Caco-2 (cell line): ENCODE measurements at regions of chr7 and their contacts with region 1.

Region 1: GRCh38 chr7:29878081-29878688 is 71.9 kb downstream of the WIPF3 start:
- DNase-seq: peak in 1 of 2 experiments; percentile 26
- H3K4me3 ChIP-seq: no peak overlapping the region
- H3K4me3 Mint-ChIP-seq: no peak overlapping the region
- H3K27ac Mint-ChIP-seq: no peak overlapping the region
- H3K4me1 ChIP-seq: no peaks in the 10 kb centered on the region
- H3K4me1 Mint-ChIP-seq: no peaks in the 10 kb centered on the region
- H3K27me3 ChIP-seq: no peaks in the 10 kb centered on the region; the same call in 1 of the 2 replicates
- H3K27me3 Mint-ChIP-seq: peaks cover 6% of the 10 kb centered on the region
- CTCF ChIP-seq: peak; percentile 57 to 58

Region 2: GRCh38 chr7:29806208-29806994 is 71.8 kb before region 1 on chr7 and contains the start of gene WIPF3:
- CTCF ChIA-PET with region 1: no interaction called
- POLR2A ChIA-PET with region 1: no interaction called
- intact Hi-C with region 1: no loop called
- DNase-seq: peak; percentile 51 to 71
- H3K4me3 ChIP-seq: peak within 1 kb of the TSS; percentile 50
- H3K4me3 Mint-ChIP-seq: peak within 1 kb of the TSS; percentile 68
- H3K27ac Mint-ChIP-seq: no peak within 1 kb of the TSS
- H3K4me1 ChIP-seq: peaks cover 10% of the 10 kb centered on the region; the same call in 1 of the 2 replicates
- H3K4me1 Mint-ChIP-seq: no peaks in the 10 kb centered on the region
- H3K27me3 ChIP-seq: no peaks in the 10 kb centered on the region
- H3K27me3 Mint-ChIP-seq: peaks cover 23% of the 10 kb centered on the region
- CTCF ChIP-seq: peak in 1 of 2 experiments; percentile 25
- total RNA-seq, gene WIPF3: 1.1 and 1.2 TPM in 2 replicates

Region 3: GRCh38 chr7:29854257-29854938 is 23.8 kb before region 1 on chr7:
- CTCF ChIA-PET with region 1: interaction called, 3 read pairs
- POLR2A ChIA-PET with region 1: no interaction called
- intact Hi-C with region 1: loop called (anchors 1 kb)
- DNase-seq: peak; percentile 80 to 84
- H3K4me3 ChIP-seq: no peak overlapping the region
- H3K4me3 Mint-ChIP-seq: no peak overlapping the region
- H3K27ac Mint-ChIP-seq: no peak overlapping the region
- H3K4me1 ChIP-seq: peaks cover 7% of the 10 kb centered on the region
- H3K4me1 Mint-ChIP-seq: peaks cover 19% of the 10 kb centered on the region
- H3K27me3 ChIP-seq: no peaks in the 10 kb centered on the region
- H3K27me3 Mint-ChIP-seq: no peaks in the 10 kb centered on the region
- CTCF ChIP-seq: peak; percentile 56 to 58